Endothelial cell of umbilical vein (primary cell): ENCODE measurements at regions of chr12 and their contacts with region 1.

Region 1: DNA sequence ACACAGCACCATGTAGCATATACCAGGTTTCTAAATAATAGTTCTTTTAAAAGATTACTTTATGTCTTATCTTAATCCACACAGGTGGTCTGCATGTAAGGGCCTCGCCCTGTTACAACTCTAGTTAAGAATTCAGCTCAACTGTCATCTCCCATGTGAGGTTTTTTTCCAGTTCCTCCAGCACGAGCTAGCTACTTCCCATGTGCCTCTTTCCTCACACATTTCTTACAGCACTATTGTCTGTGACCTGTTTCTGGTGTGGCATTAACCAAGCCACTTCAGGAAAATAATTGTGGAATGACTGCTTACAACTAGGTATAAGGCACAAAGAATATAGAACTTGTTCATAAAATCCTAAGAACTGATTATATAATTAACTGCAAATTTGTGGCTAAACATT is 65.5 kb downstream of the SH2B3 start:
- DNase-seq: no peak
- H3K4me3 ChIP-seq: no peak overlapping the region
- H3K27ac ChIP-seq: no peak overlapping the region
- H3K4me1 ChIP-seq: peaks cover 3% of the 10 kb centered on the region
- H3K27me3 ChIP-seq: no peaks in the 10 kb centered on the region
- CTCF ChIP-seq: no peak
- POLR2A ChIP-seq: no peak

Region 2: DNA sequence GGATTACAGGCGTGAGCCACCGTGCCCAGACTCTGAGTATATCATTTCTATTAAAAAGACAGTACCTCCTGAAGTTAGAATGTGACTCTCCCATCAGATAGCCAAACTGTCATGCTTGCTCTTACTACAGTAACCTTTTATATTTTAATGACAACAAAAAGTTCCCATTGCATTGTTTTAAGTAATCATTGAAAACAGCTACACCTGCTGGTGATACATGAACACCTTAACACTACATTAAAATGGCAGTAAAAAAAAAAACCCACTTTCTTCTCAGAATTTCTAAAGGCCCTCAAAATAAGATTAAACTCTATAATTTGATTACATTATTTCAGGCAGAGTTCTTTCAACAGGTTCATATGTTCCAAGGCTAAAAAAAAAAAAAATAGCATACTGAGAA is 11.2 kb after region 1 on chr12:
- CTCF ChIA-PET with region 1: interaction called, 15 read pairs
- POLR2A ChIA-PET with region 1: no interaction called
- dilution Hi-C with region 1: no loop called
- intact Hi-C with region 1: no loop called
- DNase-seq: no peak
- H3K4me3 ChIP-seq: no peak overlapping the region
- H3K27ac ChIP-seq: no peak overlapping the region
- H3K4me1 ChIP-seq: no peaks in the 10 kb centered on the region
- H3K27me3 ChIP-seq: no peaks in the 10 kb centered on the region
- CTCF ChIP-seq: peak in 1 of 2 donors; percentile 16
- POLR2A ChIP-seq: no peak